ENCODE measurements at regions of chr1 and their contacts with region 1.

Region 1: GRCh38 chr1:212595787-212596714 is 12.5 kb upstream of the ATF3 start:
- DNase-seq: peak; percentile 64
- H3K4me3 Mint-ChIP-seq: peak overlapping the region; percentile 68
- H3K27ac Mint-ChIP-seq: peak overlapping the region; percentile 96
- H3K4me1 Mint-ChIP-seq: peaks cover 27% of the 10 kb centered on the region
- H3K27me3 Mint-ChIP-seq: peaks cover 10% of the 10 kb centered on the region

Region 2: DNA sequence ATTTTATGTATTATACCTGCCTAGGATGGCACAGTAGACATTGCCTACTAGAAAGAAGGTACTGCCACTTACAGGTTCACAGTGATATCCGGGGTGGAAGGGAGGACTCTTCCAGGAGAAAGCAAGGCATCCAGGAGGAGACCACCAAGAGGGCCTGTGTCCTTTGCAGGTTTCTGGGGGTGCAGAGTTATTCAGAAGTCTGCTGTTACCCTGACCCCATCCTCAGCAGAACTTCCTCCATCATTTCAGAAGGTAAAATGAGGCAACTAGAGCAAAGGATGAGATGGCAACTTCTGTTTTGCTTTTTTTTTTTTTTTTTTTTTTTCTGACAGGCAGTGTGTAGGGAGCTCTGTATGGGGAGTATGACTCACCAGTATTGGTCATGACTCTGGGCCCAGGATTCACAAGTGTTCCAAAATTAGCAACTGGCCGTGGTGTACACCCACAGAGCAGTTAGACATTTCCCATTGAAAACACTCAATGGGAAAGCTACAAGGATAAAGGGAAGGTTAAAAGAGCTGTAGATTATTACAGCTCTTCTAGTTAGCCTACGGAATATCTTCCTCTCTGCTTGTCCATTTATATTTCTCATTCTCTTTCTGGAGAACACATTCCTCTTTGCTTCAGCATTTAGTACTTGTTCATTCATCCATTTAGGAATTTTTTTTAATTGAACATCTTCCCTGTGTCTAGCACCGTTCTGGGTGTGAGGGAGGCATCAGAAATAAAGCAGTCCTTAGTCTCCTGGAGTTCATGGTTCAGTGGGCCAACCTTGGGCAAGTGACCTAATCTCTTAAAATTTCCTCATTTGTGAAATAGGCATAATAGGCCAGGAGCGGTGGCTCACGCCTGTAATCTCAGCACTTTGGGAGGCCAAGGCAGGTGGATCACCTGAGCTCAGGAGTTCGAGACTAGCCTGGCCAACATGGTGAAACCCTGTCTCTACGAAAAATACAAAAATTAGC is 361.3 kb before region 1 on chr1:
- intact Hi-C with region 1: loop called (anchors 5 kb)
- DNase-seq: no peak
- H3K4me3 Mint-ChIP-seq: peak overlapping the region; percentile 57
- H3K27ac Mint-ChIP-seq: peak overlapping the region; percentile 67
- H3K4me1 Mint-ChIP-seq: peaks cover 72% of the 10 kb centered on the region
- H3K27me3 Mint-ChIP-seq: no peaks in the 10 kb centered on the region

Region 3: GRCh38 chr1:212558693-212559480 is 37.2 kb before region 1 on chr1:
- intact Hi-C with region 1: loop called (anchors 1 kb)
- DNase-seq: peak; percentile 88
- H3K4me3 Mint-ChIP-seq: peak overlapping the region; percentile 61
- H3K27ac Mint-ChIP-seq: peak overlapping the region; percentile 93
- H3K4me1 Mint-ChIP-seq: peaks cover 10% of the 10 kb centered on the region
- H3K27me3 Mint-ChIP-seq: peaks cover 38% of the 10 kb centered on the region

Region 4: GRCh38 chr1:212630158-212630900 is 34.3 kb after region 1 on chr1:
- intact Hi-C with region 1: loop called (anchors 1 kb)
- DNase-seq: peak; percentile 48
- H3K4me3 Mint-ChIP-seq: no peak overlapping the region
- H3K27ac Mint-ChIP-seq: no peak overlapping the region
- H3K4me1 Mint-ChIP-seq: peaks cover 11% of the 10 kb centered on the region
- H3K27me3 Mint-ChIP-seq: peaks cover 6% of the 10 kb centered on the region

Region 5: DNA sequence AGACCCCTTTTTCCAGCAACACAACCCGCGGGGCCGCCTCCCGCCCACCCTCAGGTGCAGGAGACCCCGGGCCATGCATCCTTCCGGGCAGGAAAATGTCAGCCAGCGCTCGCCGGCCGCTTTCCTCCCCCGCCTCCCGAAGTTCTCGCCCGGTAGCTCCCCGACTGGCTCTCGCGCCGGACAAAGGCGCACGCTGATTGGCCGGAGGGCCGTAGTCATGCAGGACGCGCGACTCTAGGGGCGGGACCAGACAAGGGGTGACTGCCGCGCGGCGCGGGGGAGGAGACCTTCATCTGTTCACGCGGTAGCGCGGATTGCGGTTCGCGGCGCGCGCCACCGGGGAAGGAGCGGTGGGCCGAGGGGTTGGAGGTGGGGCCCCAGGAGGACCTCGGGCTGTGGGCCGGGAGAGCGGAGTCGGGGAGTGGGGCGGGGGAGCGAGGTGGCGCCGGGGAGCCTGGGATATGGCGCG is 262.0 kb after region 1 on chr1 and contains the start of gene FLVCR1:
- intact Hi-C with region 1: loop called (anchors 2 kb)
- DNase-seq: peak; percentile 96
- H3K4me3 Mint-ChIP-seq: peak within 1 kb of the TSS; percentile 53
- H3K27ac Mint-ChIP-seq: peak within 1 kb of the TSS; percentile 98
- H3K4me1 Mint-ChIP-seq: peaks cover 15% of the 10 kb centered on the region
- H3K27me3 Mint-ChIP-seq: peaks cover 2% of the 10 kb centered on the region
- total RNA-seq, gene FLVCR1: 18.5 and 18.7 TPM in 2 replicates

Measured in activated T-helper 1 cell treated with anti-CD3 and anti-CD28 coated beads, Interleukin-12 subunit alpha, Interleukin-12 subunit beta, Interleukin-2, Interleukin-4 antibody, amounts not matched to agents 30 ng/mL and 10 ng/mL and 1 ng/mL, durations not matched to agents 14 hours and 24 hours and 36 hours (primary cell).